ENCODE measurements at regions of chr3 and their contacts with region 1.

Region 1: DNA sequence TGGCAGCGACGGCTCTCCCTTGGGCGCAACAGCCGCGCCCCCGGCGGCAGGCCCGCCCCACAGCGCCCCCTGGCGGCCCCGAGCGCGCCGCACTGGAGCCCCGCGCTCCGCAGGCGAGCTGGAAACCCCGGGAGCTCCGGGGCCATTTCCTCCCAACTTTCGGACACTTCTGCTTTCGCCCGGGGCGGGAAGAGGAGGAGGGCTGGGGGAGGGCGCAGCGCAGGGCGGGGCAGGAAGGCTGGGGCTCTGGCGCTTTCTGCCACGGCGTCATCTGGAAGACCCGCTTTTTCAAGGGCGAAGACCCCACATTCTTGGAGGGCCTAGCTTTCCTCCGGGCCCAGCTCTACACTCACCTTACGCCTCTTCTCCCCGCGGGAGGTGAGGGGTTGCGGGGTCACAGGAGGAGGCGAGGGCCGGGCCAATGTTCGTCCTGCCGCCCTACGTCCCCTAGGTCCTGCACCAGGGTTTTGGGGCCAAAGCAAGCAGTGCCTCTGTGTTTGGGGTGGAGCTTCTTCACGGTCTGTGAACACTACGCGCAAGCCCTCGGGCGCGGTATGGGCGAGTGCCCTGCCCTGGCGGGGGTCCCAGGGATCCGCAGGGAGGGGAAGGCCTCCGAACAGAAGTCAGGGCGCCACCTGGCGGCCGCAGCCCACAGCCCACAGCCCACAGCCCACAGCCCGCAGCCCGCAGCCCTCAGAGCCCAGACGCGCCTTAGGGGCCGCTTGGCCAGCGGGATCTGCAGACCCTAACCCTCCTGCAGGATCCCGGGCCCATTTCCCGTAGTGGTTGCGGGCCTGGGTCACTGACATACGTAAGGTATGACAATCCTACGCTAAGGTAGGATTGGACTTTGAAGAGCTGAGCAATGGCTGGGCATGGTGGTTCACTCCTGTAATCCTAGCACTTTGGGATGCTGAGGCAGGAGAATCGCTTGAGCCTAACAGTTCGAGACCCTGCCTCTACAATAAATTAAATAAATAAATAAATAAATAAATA is 31.1 kb downstream of the FOXL2 start:
- DNase-seq: peak; percentile 72 to 79 (median 75)
- H3K4me3 ChIP-seq: peak overlapping the region; percentile 69 to 73
- H3K4me3 Mint-ChIP-seq: peak overlapping the region; percentile 69 to 89 (median 86)
- H3K27ac ChIP-seq: peak overlapping the region; percentile 27
- H3K27ac Mint-ChIP-seq: peak overlapping the region in 6 of 7 donors; percentile 8 to 75 (median 62)
- H3K4me1 ChIP-seq: peaks cover 7% of the 10 kb centered on the region
- H3K4me1 Mint-ChIP-seq: peaks cover 3 to 6% (median 4%) of the 10 kb centered on the region in 4 donors
- H3K27me3 ChIP-seq: no peaks in the 10 kb centered on the region
- H3K27me3 Mint-ChIP-seq: peaks cover 2 to 6% of the 10 kb centered on the region in 2 donors

Region 2: GRCh38 chr3:138417559-138417982 is 498.2 kb before region 1 on chr3:
- CTCF ChIA-PET with region 1: interaction called, 21 read pairs
- POLR2A ChIA-PET with region 1: no interaction called
- intact Hi-C with region 1: no loop called
- DNase-seq: peak; percentile 38 to 52 (median 40)
- H3K4me3 ChIP-seq: no peak overlapping the region
- H3K4me3 Mint-ChIP-seq: no peak overlapping the region
- H3K27ac ChIP-seq: no peak overlapping the region
- H3K27ac Mint-ChIP-seq: no peak overlapping the region
- H3K4me1 ChIP-seq: no peaks in the 10 kb centered on the region
- H3K4me1 Mint-ChIP-seq: no peaks in the 10 kb centered on the region
- H3K27me3 ChIP-seq: no peaks in the 10 kb centered on the region
- H3K27me3 Mint-ChIP-seq: peaks cover 5 to 14% of the 10 kb centered on the region in 2 donors

Region 3: DNA sequence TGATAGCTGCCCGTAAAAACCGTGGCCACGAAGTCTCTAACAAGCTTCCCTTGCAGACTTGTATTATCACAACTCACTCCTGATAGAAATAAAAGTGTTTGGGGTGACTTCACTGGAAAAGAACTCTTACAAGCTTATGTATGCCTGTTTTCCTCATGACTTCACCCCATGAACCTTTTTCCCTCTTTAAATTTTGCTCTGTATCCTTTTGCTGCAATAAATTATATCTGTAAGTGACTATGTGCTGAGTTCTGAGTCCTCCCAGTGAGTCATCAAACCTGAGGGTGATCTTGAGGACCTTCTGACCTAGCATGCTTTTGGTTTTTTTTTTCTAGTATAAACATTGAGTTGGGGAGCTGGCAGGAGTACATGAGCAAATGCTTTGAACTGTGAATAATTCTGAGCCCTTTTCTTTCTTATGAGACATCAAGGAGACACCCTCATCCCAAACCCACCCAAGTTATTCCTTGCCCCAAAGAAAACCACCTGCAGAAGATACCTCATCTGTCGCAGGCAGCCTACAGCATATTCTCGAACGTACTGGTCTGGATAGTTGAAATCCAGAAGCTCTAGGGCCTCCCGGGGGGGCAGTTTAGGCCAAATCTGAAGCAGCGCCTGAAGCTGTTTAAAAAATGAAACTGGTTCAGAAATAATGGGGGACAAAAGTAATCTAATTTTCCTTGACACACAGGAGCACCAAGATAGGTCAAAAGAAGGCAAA is 221.4 kb before region 1 on chr3:
- CTCF ChIA-PET with region 1: interaction called, 739 read pairs
- POLR2A ChIA-PET with region 1: interaction called, 14 read pairs
- intact Hi-C with region 1: loop called (anchors 1 kb)
- DNase-seq: no peak
- H3K4me3 ChIP-seq: no peak overlapping the region
- H3K4me3 Mint-ChIP-seq: no peak overlapping the region
- H3K27ac ChIP-seq: no peak overlapping the region
- H3K27ac Mint-ChIP-seq: peak overlapping the region in 1 of 7 donors; percentile 41
- H3K4me1 ChIP-seq: no peaks in the 10 kb centered on the region
- H3K4me1 Mint-ChIP-seq: no peaks in the 10 kb centered on the region
- H3K27me3 ChIP-seq: no peaks in the 10 kb centered on the region
- H3K27me3 Mint-ChIP-seq: no peaks in the 10 kb centered on the region

Region 4: DNA sequence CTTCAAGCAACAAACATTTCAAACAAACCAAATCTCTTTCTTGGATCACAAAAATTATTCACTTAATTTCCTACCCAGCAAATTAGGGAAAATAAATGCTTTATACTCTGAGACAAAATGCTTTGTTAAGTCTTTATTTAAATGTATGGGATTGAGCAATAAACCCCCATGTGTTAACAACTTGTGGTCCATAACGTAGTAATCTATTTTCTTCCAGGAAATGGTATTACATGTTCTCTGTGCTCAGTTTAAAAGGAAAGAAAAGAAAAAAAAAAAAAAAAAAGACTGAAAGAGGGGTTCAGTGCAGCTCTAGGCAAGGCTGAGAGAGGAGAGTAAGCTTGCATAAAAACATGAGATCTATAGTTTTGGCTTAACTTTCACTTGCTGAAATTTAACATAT is 183.3 kb before region 1 on chr3:
- CTCF ChIA-PET with region 1: interaction called, 12 read pairs
- POLR2A ChIA-PET with region 1: no interaction called
- intact Hi-C with region 1: no loop called
- DNase-seq: no peak
- H3K4me3 ChIP-seq: no peak overlapping the region
- H3K4me3 Mint-ChIP-seq: no peak overlapping the region
- H3K27ac ChIP-seq: no peak overlapping the region
- H3K27ac Mint-ChIP-seq: no peak overlapping the region
- H3K4me1 ChIP-seq: no peaks in the 10 kb centered on the region
- H3K4me1 Mint-ChIP-seq: peaks cover 0 to 3% (median under 1%) of the 10 kb centered on the region in 4 donors
- H3K27me3 ChIP-seq: no peaks in the 10 kb centered on the region
- H3K27me3 Mint-ChIP-seq: no peaks in the 10 kb centered on the region

Region 5: DNA sequence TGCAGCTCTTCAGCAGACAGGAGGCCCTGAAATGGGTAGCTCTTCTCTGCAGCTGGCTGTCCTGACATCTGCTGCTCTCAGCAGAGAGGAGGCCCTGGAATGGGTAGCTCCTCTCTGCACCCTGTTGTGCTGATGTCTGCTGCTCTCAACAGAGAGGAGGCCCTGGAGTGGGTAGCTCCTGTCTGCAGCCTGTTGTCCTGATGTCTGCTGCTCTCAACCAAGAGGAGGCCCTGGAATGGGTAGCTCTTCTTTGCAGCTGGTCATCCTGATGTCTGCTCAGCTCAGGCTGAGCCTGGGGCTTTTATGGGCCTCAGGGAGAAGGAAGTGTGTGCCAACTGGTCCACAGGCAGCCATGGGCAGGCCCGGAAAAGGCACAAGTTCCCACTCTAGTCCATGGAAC is 147.7 kb before region 1 on chr3:
- CTCF ChIA-PET with region 1: interaction called, 19 read pairs
- POLR2A ChIA-PET with region 1: no interaction called
- intact Hi-C with region 1: no loop called
- DNase-seq: no peak
- H3K4me3 ChIP-seq: no peak overlapping the region
- H3K4me3 Mint-ChIP-seq: no peak overlapping the region
- H3K27ac ChIP-seq: no peak overlapping the region
- H3K27ac Mint-ChIP-seq: no peak overlapping the region
- H3K4me1 ChIP-seq: peaks cover 13% of the 10 kb centered on the region
- H3K4me1 Mint-ChIP-seq: peaks cover 13 to 19% (median 15%) of the 10 kb centered on the region in 4 donors
- H3K27me3 ChIP-seq: no peaks in the 10 kb centered on the region
- H3K27me3 Mint-ChIP-seq: no peaks in the 10 kb centered on the region

Region 6: DNA sequence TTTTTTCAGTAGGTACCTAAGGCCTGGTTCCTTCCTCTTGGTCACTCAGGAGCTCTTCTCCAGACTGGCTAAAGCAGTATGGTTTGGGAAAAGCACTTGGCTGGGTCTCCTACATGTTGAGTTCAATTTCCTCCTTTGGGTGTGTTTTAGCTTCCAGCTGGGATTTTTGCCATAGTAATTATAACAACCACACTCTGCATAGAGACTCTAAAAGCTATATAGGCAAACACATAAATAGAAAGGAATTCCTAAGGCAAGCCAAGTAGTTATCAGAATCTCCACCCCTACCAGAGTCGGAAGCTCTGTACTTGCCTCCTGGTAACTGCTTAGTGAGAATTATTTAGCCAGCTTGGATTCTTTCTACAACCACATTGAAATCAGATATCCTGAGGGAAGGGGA is 17.5 kb before region 1 on chr3:
- CTCF ChIA-PET with region 1: interaction called, 31 read pairs
- POLR2A ChIA-PET with region 1: no interaction called
- intact Hi-C with region 1: no loop called
- DNase-seq: no peak
- H3K4me3 ChIP-seq: no peak overlapping the region
- H3K4me3 Mint-ChIP-seq: no peak overlapping the region
- H3K27ac ChIP-seq: no peak overlapping the region
- H3K27ac Mint-ChIP-seq: peak overlapping the region in 1 of 7 donors; percentile 20
- H3K4me1 ChIP-seq: no peaks in the 10 kb centered on the region
- H3K4me1 Mint-ChIP-seq: no peaks in the 10 kb centered on the region
- H3K27me3 ChIP-seq: no peaks in the 10 kb centered on the region
- H3K27me3 Mint-ChIP-seq: peaks cover 0 to 1% of the 10 kb centered on the region in 2 donors

Region 7: GRCh38 chr3:138974462-138974861 is 58.7 kb after region 1 on chr3:
- CTCF ChIA-PET with region 1: no interaction called
- POLR2A ChIA-PET with region 1: no interaction called
- intact Hi-C with region 1: no loop called
- DNase-seq: no peak
- H3K4me3 ChIP-seq: no peak overlapping the region
- H3K4me3 Mint-ChIP-seq: no peak overlapping the region
- H3K27ac ChIP-seq: no peak overlapping the region
- H3K27ac Mint-ChIP-seq: no peak overlapping the region
- H3K4me1 ChIP-seq: no peaks in the 10 kb centered on the region
- H3K4me1 Mint-ChIP-seq: no peaks in the 10 kb centered on the region
- H3K27me3 ChIP-seq: no peaks in the 10 kb centered on the region
- H3K27me3 Mint-ChIP-seq: peaks cover 18 to 21% of the 10 kb centered on the region in 2 donors